ENCODE measurements at regions of chr12 and their contacts with region 1.

Region 1: DNA sequence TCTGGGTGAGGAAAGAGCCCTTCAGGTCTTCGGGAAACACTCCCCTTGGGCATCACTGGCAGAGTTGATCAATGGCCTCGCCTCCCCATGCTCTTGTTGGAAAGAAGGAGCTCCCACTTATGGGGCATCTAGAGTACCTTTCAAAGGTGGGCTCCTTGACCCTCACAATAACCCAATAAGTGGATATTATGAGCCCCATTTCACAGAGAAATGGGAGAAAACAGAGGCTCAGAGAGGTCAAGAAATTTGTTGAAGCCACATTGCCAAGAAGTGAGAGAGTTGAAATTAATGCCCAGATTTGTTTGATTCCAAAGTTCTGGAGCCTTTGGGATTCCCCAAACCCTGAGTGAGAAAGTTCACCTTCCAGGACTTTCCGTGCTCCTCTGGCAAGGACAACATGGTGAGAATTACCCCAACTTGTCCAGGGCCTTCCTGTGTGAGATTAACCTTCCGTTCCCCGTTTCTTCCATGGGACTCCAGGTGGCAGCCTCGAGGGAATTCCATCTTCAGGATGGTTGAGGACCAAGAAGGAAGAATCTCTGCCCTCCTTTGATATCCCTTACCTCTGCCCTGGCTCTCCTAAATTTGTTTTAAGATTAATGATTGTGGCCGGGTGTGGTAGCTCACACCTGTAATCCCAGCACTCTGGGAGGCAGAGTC is 7.5 kb upstream of the CHD4 start:
- DNase-seq: peak; percentile 61
- H3K4me3 ChIP-seq: no peak overlapping the region
- H3K27ac ChIP-seq: peak overlapping the region; percentile 72
- H3K4me1 ChIP-seq: peaks cover 6% of the 10 kb centered on the region
- H3K27me3 ChIP-seq: no peaks in the 10 kb centered on the region
- CTCF ChIP-seq: no peak

Region 2: GRCh38 chr12:6647083-6647604 is 32.5 kb after region 1 on chr12 and contains the start of gene ACRBP:
- intact Hi-C with region 1: loop called (anchors 1 kb)
- DNase-seq: peak; percentile 82
- H3K4me3 ChIP-seq: peak within 1 kb of the TSS; percentile 38
- H3K27ac ChIP-seq: no peak within 1 kb of the TSS
- H3K4me1 ChIP-seq: no peaks in the 10 kb centered on the region
- H3K27me3 ChIP-seq: no peaks in the 10 kb centered on the region
- CTCF ChIP-seq: no peak
- total RNA-seq, gene ACRBP: 1.6 to 1.9 TPM

Region 3: GRCh38 chr12:6688999-6689882 is 74.6 kb after region 1 on chr12 and contains the start of gene ZNF384:
- intact Hi-C with region 1: loop called (anchors 5 kb)
- DNase-seq: peak; percentile 98
- H3K4me3 ChIP-seq: peak within 1 kb of the TSS; percentile 79
- H3K27ac ChIP-seq: peak within 1 kb of the TSS; percentile 96
- H3K4me1 ChIP-seq: peaks cover 8% of the 10 kb centered on the region
- H3K27me3 ChIP-seq: no peaks in the 10 kb centered on the region
- CTCF ChIP-seq: no peak
- total RNA-seq, gene ZNF384: 50.0 to 53.6 TPM

Region 4: DNA sequence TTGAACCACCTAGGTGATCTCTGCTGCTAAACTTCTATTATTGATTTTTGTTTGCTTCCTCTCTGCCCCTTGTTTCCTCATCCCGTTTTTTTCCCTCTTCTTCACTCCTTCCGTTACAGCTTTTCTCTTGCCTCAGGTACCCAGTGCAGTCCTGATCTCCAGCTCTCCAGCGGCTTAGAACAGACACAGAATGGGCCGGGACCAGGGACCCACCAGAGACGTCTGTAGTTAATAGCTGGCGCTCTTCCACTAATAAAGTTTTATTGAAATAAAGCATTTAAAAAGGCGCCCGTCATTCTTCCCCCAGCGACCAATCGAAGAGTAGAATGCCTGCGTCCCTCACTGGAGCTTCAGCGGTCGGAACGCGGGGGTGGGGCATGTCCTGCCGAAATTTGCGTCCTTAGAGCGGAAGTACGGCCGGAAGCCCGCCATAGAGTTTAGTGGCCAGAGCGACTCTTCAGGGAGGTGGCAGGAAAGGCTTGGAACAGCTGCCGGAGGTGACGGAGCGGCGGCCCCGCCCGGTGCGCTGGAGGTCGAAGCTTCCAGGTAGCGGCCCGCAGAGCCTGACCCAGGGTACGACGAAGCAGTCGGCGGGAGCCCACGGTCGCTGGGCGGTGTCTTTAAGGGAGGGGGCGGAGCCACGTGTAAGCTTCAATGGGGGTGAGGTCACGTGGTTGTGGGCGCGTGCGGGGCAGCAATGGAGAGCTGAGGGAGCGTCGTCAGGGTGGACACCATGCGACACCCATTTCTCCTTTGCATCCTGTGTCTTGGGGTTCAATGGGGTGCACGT is 109.2 kb after region 1 on chr12 and contains the start of gene COPS7A:
- intact Hi-C with region 1: no loop called
- DNase-seq: peak; percentile 99
- H3K4me3 ChIP-seq: peak within 1 kb of the TSS; percentile 44
- H3K27ac ChIP-seq: peak within 1 kb of the TSS; percentile 80
- H3K4me1 ChIP-seq: peaks cover 6% of the 10 kb centered on the region
- H3K27me3 ChIP-seq: no peaks in the 10 kb centered on the region
- CTCF ChIP-seq: no peak
- total RNA-seq, gene COPS7A: 33.3 to 47.6 TPM

Measured in colonic mucosa (tissue), 4 donors.